Caco-2 (cell line): ENCODE measurements at regions of chr2 and their contacts with region 1.

Region 1: DNA sequence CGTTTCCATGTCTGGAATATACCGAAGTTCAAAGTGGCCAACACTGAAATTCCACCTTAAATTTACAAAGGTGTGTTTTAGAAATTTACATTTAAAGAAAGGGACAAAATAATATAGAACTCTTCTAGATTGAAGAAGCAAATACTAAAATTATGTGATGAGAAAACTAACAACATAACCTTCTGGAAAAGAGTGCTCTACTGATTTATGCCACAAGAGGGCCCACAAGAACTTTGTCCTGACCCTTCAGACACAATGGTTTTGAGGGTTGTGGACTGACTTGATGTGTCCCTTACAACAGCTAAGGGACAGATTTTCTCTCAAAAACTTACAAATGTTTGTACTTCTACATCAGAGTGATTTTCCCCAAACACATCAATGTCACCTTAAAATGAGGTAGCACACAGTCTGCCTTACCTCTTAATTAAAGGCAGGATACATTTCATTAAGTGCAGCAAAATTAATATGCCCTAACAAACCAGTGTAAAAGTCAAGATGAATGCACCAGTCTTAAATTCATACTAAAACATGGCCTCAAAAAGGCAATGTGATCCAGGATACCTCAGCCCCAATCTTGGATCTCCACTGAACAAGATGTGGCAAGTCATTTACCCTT is 36.2 kb downstream of the EIF2AK3 start:
- DNase-seq: peak; percentile 47 to 75
- H3K4me3 ChIP-seq: no peak overlapping the region
- H3K4me3 Mint-ChIP-seq: no peak overlapping the region
- H3K27ac Mint-ChIP-seq: no peak overlapping the region
- H3K4me1 ChIP-seq: peaks cover 11% of the 10 kb centered on the region
- H3K4me1 Mint-ChIP-seq: no peaks in the 10 kb centered on the region
- H3K27me3 ChIP-seq: no peaks in the 10 kb centered on the region
- H3K27me3 Mint-ChIP-seq: no peaks in the 10 kb centered on the region
- CTCF ChIP-seq: peak; percentile 76 to 78

Region 2: DNA sequence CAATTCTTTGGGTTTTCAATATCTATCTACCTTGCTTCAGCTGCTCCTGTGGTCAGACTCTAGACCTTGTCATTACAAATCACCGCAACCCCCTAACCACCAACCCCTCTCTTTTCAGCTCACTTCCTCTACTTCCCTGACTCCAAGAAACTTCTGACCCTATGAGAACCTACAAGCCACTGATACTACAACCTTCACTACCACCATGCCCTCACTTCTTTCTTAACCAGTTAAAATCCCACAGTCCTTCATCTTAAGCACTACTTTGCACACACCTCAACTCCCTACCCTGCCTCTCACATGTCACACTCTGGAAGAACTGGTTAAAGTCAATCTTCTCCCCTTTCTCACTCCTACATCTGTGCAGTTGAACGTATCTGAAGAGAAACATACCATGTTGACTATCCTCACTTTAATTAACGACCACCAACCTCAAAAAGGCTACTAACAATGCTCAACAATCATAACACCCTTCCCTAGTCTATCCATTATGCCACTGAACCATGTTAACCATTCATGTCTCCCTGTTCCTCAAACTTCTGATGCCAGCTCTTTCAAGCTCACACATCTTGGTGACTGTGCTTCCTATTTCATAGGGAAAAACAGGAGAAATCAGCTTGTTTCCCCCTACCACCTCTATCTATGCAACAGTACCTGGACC is 23.5 kb after region 1 on chr2:
- CTCF ChIA-PET with region 1: no interaction called
- POLR2A ChIA-PET with region 1: no interaction called
- intact Hi-C with region 1: no loop called
- DNase-seq: no peak
- H3K4me3 ChIP-seq: no peak overlapping the region
- H3K4me3 Mint-ChIP-seq: no peak overlapping the region
- H3K27ac Mint-ChIP-seq: no peak overlapping the region
- H3K4me1 ChIP-seq: peaks cover 12% of the 10 kb centered on the region
- H3K4me1 Mint-ChIP-seq: no peaks in the 10 kb centered on the region
- H3K27me3 ChIP-seq: no peaks in the 10 kb centered on the region
- H3K27me3 Mint-ChIP-seq: no peaks in the 10 kb centered on the region
- CTCF ChIP-seq: no peak

Region 3: GRCh38 chr2:88669371-88670214 is 78.5 kb after region 1 on chr2:
- CTCF ChIA-PET with region 1: interaction called, 17 read pairs
- POLR2A ChIA-PET with region 1: no interaction called
- intact Hi-C with region 1: loop called (anchors 1 kb)
- DNase-seq: peak; percentile 49 to 68
- H3K4me3 ChIP-seq: no peak overlapping the region
- H3K4me3 Mint-ChIP-seq: no peak overlapping the region
- H3K27ac Mint-ChIP-seq: no peak overlapping the region
- H3K4me1 ChIP-seq: peaks cover 16% of the 10 kb centered on the region
- H3K4me1 Mint-ChIP-seq: peaks cover 17% of the 10 kb centered on the region
- H3K27me3 ChIP-seq: no peaks in the 10 kb centered on the region
- H3K27me3 Mint-ChIP-seq: no peaks in the 10 kb centered on the region
- CTCF ChIP-seq: peak; percentile 74 to 78

Region 4: GRCh38 chr2:88764850-88765153 is 173.7 kb after region 1 on chr2:
- CTCF ChIA-PET with region 1: no interaction called
- POLR2A ChIA-PET with region 1: no interaction called
- intact Hi-C with region 1: loop called (anchors 5 kb)
- DNase-seq: no peak
- H3K4me3 ChIP-seq: no peak overlapping the region
- H3K4me3 Mint-ChIP-seq: no peak overlapping the region
- H3K27ac Mint-ChIP-seq: no peak overlapping the region
- H3K4me1 ChIP-seq: no peaks in the 10 kb centered on the region
- H3K4me1 Mint-ChIP-seq: no peaks in the 10 kb centered on the region
- H3K27me3 ChIP-seq: no peaks in the 10 kb centered on the region
- H3K27me3 Mint-ChIP-seq: no peaks in the 10 kb centered on the region
- CTCF ChIP-seq: no peak